Caco-2 (cell line): ENCODE measurements at regions of chr5 and their contacts with region 1.

Region 1: DNA sequence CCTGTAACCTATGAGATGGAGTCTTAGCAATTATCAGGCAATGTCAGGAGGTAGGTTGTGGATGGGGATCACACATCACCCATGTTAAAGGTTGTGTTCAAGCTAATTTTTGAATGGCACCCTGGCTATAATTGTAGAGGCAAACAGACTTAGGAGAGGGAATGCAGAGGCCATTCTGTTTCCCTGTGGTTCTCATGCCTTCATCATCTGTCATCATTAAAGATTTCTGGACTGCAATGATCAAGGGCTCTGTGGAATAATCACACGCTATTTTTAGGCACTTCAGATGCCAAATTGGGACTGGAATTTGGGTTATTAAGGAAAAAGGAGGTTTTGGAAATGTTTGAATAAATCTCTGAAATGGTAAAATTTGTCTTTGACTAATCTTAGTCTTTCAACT is 1065.4 kb downstream of the TAF11L14 start:
- DNase-seq: no peak
- H3K4me3 ChIP-seq: no peak overlapping the region
- H3K4me3 Mint-ChIP-seq: no peak overlapping the region
- H3K27ac Mint-ChIP-seq: no peak overlapping the region
- H3K4me1 ChIP-seq: no peaks in the 10 kb centered on the region
- H3K4me1 Mint-ChIP-seq: no peaks in the 10 kb centered on the region
- H3K27me3 ChIP-seq: no peaks in the 10 kb centered on the region
- H3K27me3 Mint-ChIP-seq: peaks cover 2% of the 10 kb centered on the region
- CTCF ChIP-seq: no peak

Region 2: DNA sequence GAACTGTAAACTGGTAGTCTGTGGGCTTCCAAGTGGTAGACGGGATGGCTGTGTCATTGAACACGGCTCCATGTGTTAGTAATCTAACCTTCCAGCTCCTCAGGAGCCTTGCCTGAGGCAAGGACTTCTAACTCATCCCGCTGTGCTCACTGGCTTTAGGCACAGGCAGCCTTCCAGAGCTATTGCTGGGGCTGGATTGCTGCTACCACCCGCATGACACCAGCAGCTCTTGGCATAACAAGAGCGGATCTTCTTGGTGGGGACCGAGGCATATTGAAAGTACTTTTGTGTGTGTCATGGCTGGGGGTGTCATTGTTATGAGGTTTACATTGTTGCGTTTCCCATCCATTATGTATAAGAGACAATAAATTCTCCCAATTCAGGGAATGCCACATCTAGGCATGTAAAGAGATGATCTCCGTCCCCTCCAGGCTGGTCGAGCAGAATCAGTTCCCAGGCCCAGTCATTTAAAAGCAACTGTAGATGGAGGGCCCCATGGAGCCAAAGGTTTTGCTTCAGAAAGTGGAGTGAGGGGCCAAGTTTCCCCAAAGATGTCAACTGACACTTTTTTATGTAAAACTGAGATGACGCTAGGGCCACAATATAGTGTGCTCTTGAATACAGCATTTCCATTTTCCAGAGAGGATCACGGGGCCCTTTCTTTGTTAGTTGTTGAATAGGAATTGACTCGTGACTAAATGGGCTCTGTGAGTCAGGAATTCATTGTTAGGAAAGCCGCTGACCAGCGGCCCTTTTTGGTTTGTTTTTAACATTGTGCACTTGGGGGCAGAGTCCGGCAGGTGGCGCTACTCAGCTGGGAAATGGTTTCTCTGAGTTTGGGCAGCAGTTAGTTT is 305.9 kb before region 1 on chr5:
- CTCF ChIA-PET with region 1: interaction called, 4 read pairs
- POLR2A ChIA-PET with region 1: no interaction called
- intact Hi-C with region 1: loop called (anchors 1 kb)
- DNase-seq: peak; percentile 54 to 70
- H3K4me3 ChIP-seq: no peak overlapping the region
- H3K4me3 Mint-ChIP-seq: no peak overlapping the region
- H3K27ac Mint-ChIP-seq: no peak overlapping the region
- H3K4me1 ChIP-seq: no peaks in the 10 kb centered on the region
- H3K4me1 Mint-ChIP-seq: no peaks in the 10 kb centered on the region
- H3K27me3 ChIP-seq: no peaks in the 10 kb centered on the region
- H3K27me3 Mint-ChIP-seq: no peaks in the 10 kb centered on the region
- CTCF ChIP-seq: peak; percentile 79 to 89

Region 3: DNA sequence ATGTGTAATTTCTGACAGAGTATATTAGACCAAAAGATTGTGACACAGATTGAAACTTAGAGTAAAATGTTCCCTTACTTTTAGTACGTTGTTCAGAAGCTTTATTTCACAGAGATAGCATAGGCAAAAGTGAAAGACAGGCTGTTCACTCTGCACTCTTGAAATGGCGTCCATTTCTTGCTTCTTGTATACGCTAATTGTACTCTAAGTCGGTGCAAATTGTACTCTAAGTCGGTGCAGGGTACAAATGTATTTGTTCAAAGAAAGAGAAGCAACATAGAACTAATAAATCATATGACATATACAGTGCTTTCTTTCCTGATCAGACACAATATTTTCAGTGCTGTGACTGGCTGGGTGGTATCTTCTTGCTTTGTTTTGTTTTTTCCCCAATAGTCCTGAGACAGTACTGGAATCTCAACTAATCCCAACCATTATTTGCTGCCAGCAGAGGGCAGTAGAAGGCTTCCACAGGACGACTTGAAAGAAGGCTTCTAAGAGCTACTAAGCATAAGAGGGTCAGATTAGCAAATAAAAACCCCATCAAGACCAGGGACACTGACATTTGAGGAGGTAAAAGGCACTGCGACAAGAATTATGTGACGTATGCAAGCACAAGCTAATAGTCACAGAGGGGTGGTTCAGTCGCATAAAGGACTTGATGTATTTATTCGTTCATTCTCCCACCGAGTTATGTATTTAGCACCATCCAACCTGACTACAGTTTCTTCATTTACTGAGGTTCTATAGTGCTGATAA is 233.7 kb before region 1 on chr5:
- CTCF ChIA-PET with region 1: no interaction called
- POLR2A ChIA-PET with region 1: no interaction called
- intact Hi-C with region 1: loop called (anchors 1 kb)
- DNase-seq: peak; percentile 62 to 70
- H3K4me3 ChIP-seq: no peak overlapping the region
- H3K4me3 Mint-ChIP-seq: no peak overlapping the region
- H3K27ac Mint-ChIP-seq: no peak overlapping the region
- H3K4me1 ChIP-seq: no peaks in the 10 kb centered on the region
- H3K4me1 Mint-ChIP-seq: no peaks in the 10 kb centered on the region
- H3K27me3 ChIP-seq: no peaks in the 10 kb centered on the region
- H3K27me3 Mint-ChIP-seq: no peaks in the 10 kb centered on the region
- CTCF ChIP-seq: peak; percentile 70 to 75

Region 4: GRCh38 chr5:18602402-18602801 is 97.3 kb before region 1 on chr5:
- CTCF ChIA-PET with region 1: no interaction called
- POLR2A ChIA-PET with region 1: no interaction called
- intact Hi-C with region 1: loop called (anchors 1 kb)
- DNase-seq: no peak
- H3K4me3 ChIP-seq: no peak overlapping the region
- H3K4me3 Mint-ChIP-seq: no peak overlapping the region
- H3K27ac Mint-ChIP-seq: no peak overlapping the region
- H3K4me1 ChIP-seq: no peaks in the 10 kb centered on the region
- H3K4me1 Mint-ChIP-seq: no peaks in the 10 kb centered on the region
- H3K27me3 ChIP-seq: no peaks in the 10 kb centered on the region
- H3K27me3 Mint-ChIP-seq: peaks cover 2% of the 10 kb centered on the region
- CTCF ChIP-seq: no peak

Region 5: GRCh38 chr5:18837451-18837850 is 137.8 kb after region 1 on chr5:
- CTCF ChIA-PET with region 1: no interaction called
- POLR2A ChIA-PET with region 1: no interaction called
- intact Hi-C with region 1: no loop called
- DNase-seq: no peak
- H3K4me3 ChIP-seq: no peak overlapping the region
- H3K4me3 Mint-ChIP-seq: no peak overlapping the region
- H3K27ac Mint-ChIP-seq: no peak overlapping the region
- H3K4me1 ChIP-seq: no peaks in the 10 kb centered on the region
- H3K4me1 Mint-ChIP-seq: no peaks in the 10 kb centered on the region
- H3K27me3 ChIP-seq: no peaks in the 10 kb centered on the region
- H3K27me3 Mint-ChIP-seq: no peaks in the 10 kb centered on the region
- CTCF ChIP-seq: no peak